ENCODE measurements at regions of chr17 and their contacts with region 1.

Region 1: DNA sequence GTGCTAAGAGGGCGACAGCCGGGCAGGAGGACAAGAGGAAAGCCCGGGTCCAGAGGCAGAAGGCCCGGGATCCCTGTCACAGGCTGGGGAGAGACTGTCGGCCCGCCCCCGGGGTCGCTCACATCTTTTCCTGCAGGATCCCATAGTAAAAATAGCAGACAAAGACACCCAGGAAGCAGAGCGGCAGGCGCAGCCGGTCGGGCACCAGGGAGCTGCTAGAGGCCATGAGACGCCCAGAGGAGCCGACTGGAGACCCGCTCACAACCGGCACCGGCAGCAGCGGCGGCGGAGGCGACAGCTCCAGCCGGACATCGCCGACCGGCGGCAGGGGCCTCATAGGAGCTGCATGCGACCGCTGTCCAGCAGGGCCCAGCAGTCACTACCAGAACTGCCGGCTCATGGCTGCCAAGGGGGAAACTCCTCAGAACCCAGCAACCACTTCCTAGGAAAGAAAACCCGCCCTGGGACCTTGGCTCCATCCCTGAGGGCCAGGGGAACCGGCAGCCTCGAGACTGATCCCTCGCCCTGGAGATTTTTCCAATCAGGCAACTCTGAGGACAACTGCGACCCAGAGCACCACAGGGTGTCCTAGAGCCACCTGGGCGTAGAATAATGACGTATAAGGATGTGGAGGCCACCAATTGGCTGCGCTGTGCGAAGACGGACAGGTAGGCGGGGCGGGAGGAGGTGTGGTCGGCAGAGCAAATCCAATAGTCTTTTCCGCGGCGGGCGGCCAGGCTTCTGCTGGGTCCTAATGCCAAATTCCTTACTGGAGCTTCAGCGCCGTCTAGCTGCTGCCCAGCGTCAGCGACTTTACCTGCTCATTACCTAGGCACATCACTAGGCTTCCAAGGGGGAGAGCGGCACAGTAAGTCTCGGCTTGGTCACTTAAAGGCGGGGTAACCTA is at the start of gene SLC35B1:
- DNase-seq: peak; percentile 100
- H3K4me3 ChIP-seq: peak within 1 kb of the TSS; percentile 83 to 88 (median 85)
- H3K27ac ChIP-seq: peak within 1 kb of the TSS; percentile 83 to 96 (median 93)
- H3K4me1 ChIP-seq: peaks cover 17% of the 10 kb centered on the region in 2 donors
- H3K27me3 ChIP-seq: no peaks in the 10 kb centered on the region
- CTCF ChIP-seq: peak; percentile 25 to 88 (median 72)
- POLR2A ChIP-seq: peak in 1 of 2 donors; percentile 60
- total RNA-seq, gene SLC35B1: 77.5 to 171 (median 94.7) TPM

Region 2: GRCh38 chr17:49753959-49754391 is 46.1 kb after region 1 on chr17:
- intact Hi-C with region 1: no loop called
- DNase-seq: no peak
- H3K4me3 ChIP-seq: no peak overlapping the region
- H3K27ac ChIP-seq: no peak overlapping the region
- H3K4me1 ChIP-seq: peaks cover 13 to 24% of the 10 kb centered on the region in 2 donors
- H3K27me3 ChIP-seq: no peaks in the 10 kb centered on the region
- CTCF ChIP-seq: no peak
- POLR2A ChIP-seq: no peak

Region 3: GRCh38 chr17:49779739-49780231 is 71.9 kb after region 1 on chr17:
- intact Hi-C with region 1: loop called (anchors 2 kb)
- DNase-seq: peak; percentile 49 to 53
- H3K4me3 ChIP-seq: no peak overlapping the region
- H3K27ac ChIP-seq: peak overlapping the region in 1 of 3 donors; percentile 43
- H3K4me1 ChIP-seq: peaks cover 16 to 30% of the 10 kb centered on the region in 2 donors
- H3K27me3 ChIP-seq: no peaks in the 10 kb centered on the region
- CTCF ChIP-seq: peak in 5 of 6 experiments; percentile 32 to 74 (median 63)
- POLR2A ChIP-seq: no peak

Region 4: GRCh38 chr17:49851387-49852291 is 143.8 kb after region 1 on chr17:
- intact Hi-C with region 1: loop called (anchors 5 kb)
- DNase-seq: peak; percentile 77 to 79
- H3K4me3 ChIP-seq: peak overlapping the region in 2 of 3 donors; percentile 10 to 56
- H3K27ac ChIP-seq: peak overlapping the region in 1 of 3 donors; percentile 8
- H3K4me1 ChIP-seq: peaks cover 3 to 9% of the 10 kb centered on the region in 2 donors
- H3K27me3 ChIP-seq: no peaks in the 10 kb centered on the region
- CTCF ChIP-seq: peak in 5 of 6 experiments; percentile 47 to 79 (median 71)
- POLR2A ChIP-seq: peak in 1 of 2 donors; percentile 1

Measured in thyroid gland (tissue), 4 donors.